Activated T-helper 2 cell treated with anti-CD3 and anti-CD28 coated beads, Interferon-gamma antibody, Interleukin-2, Interleukin-4, amounts not matched to agents 10 μg/mL and 5 μg/mL and 100 μg/mL, durations not matched to agents 14 hours and 24 hours and 36 hours (primary cell): ENCODE measurements at regions of chr12 and their contacts with region 1.

Region 1: DNA sequence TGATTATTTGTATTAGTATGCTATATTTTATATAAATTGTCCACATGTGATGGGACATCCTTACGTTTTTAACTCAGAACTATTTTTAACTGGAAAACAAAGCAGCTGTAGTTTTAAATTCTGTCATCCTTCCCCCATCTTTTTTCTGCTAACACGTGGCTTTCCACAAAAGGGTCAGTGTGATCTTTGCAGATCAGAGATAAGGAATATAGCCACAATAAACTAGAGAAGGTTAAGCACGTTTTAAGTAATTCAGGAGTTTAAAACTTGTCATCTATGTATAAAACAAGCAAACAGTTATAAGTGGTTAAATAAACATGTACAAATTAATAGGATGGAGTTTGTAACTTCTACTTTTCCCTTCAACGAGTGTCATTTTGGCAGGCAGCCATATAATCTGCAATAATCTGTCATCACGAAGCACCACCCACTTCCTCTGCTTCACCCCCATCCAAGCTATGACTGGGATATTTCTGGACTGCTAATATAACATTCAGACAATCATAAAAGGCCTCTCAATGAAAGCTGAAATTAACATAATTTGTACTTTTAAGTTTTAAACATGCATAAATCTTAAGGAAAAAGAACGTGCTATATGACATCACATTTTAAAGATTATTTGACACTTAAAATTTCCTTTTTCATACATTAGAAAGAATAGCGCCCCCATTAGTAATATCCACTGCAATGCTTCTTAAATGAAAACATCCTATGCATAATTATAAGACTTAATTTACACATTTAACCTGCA is 15.3 kb downstream of the TAOK3 start:
- DNase-seq: peak; percentile 33
- H3K4me3 Mint-ChIP-seq: peak overlapping the region; percentile 92
- H3K27ac Mint-ChIP-seq: peak overlapping the region; percentile 92
- H3K4me1 Mint-ChIP-seq: peaks cover 44% of the 10 kb centered on the region
- H3K27me3 Mint-ChIP-seq: no peaks in the 10 kb centered on the region

Region 2: DNA sequence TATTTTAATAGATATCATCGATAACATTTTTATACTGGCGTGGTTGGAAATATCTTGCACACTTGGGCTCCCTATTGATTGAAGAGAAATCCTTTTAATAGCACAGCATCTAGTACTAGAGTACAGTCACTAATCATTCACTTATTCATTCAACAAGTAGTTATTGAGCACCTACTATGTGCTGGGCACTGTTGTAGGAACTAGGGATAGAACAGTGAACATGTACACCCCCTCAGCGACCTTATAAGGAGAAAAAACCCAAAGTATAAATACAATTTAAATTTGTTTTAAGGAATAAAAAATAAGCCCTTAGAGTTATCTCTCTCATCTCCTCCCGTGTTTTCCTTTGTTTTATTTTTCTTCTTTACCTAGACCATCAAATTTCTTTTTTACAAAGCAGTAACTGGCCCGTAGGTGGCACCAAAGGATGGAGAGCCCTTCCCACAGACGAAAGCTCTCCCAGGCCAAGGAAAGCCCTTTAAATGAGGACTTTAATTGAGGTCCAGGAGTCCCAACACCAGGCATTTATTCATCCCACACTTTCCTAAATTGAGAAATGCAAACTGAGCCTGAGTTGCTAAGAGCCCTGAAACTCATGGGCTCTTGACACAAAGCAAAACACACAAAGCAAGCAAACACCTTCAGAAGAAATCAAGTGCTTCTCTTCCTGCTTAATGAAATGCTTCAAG is 192.5 kb before region 1 on chr12:
- intact Hi-C with region 1: loop called (anchors 5 kb)
- DNase-seq: no peak
- H3K4me3 Mint-ChIP-seq: no peak overlapping the region
- H3K27ac Mint-ChIP-seq: peak overlapping the region; percentile 65
- H3K4me1 Mint-ChIP-seq: peaks cover 21% of the 10 kb centered on the region
- H3K27me3 Mint-ChIP-seq: no peaks in the 10 kb centered on the region

Region 3: DNA sequence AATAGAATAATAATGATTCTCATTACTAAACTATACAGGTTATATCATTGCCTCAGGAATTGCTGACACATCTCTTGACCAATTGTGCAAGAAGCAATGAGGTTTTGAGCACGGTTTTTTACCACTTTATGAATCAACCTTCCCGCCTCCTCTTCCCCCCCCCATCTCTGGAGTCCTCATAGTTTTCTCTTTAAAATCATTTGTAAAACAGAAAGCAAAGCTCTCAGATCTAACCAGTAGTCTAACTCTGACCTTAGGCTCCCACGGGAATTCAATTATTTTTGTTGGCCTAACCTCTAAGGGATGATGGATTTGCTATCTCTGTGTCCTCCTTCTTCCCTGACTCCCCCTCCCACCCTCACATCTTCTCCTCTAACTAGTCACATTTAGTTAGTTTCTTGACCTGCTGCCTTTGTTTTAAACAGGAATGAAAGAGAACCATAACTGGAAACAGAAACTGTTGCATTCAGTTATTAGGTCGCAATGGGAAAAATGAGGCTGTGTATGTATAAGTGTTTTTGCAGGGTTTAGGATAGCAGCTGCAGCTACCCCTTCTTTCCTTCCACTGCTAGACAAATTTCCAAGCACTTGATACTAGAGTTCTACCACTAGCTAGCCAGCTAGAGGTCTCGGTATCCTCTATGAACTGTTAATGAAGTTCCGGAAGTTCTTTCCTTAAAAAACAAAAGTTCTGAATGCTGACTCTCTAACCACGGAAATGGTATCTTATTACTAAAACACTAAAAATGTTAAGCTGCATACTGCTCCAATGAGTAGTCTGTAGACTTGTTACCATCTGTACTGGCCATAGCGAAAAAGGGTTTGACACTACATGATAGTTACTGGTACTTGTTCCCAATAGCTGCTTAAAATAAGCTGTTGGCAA is 50.1 kb before region 1 on chr12:
- intact Hi-C with region 1: loop called (anchors 1 kb)
- DNase-seq: no peak
- H3K4me3 Mint-ChIP-seq: peak overlapping the region; percentile 73
- H3K27ac Mint-ChIP-seq: peak overlapping the region; percentile 72
- H3K4me1 Mint-ChIP-seq: peaks cover 29% of the 10 kb centered on the region
- H3K27me3 Mint-ChIP-seq: no peaks in the 10 kb centered on the region

Region 4: GRCh38 chr12:118312578-118312977 is 44.9 kb before region 1 on chr12:
- intact Hi-C with region 1: loop called (anchors 1 kb)
- DNase-seq: no peak
- H3K4me3 Mint-ChIP-seq: no peak overlapping the region
- H3K27ac Mint-ChIP-seq: peak overlapping the region; percentile 73
- H3K4me1 Mint-ChIP-seq: peaks cover 29% of the 10 kb centered on the region
- H3K27me3 Mint-ChIP-seq: no peaks in the 10 kb centered on the region